A549 (cell line): ENCODE measurements at regions of chr19 and their contacts with region 1.

Region 1: GRCh38 chr19:41276231-41276630 is 12.1 kb downstream of the HNRNPUL1 start:
- DNase-seq: no peak
- ATAC-seq: no peak; a peak in 1 of 6 replicates
- H3K4me3 ChIP-seq: no peak overlapping the region
- H3K27ac ChIP-seq: no peak overlapping the region
- H3K4me1 ChIP-seq: no peaks in the 10 kb centered on the region
- CTCF ChIP-seq: no peak
- EP300 ChIP-seq: no peak
- POLR2A ChIP-seq: no peak
- RAD21 ChIP-seq: no peak

Region 2: GRCh38 chr19:41248895-41249294 is 27.3 kb before region 1 on chr19:
- CTCF ChIA-PET with region 1: no interaction called
- POLR2A ChIA-PET with region 1: no interaction called
- DNase-seq: no peak
- ATAC-seq: peak; percentile 67 to 68; a peak in 5 of 6 replicates
- H3K4me3 ChIP-seq: no peak overlapping the region
- H3K27ac ChIP-seq: no peak overlapping the region
- H3K4me1 ChIP-seq: no peaks in the 10 kb centered on the region
- CTCF ChIP-seq: no peak
- EP300 ChIP-seq: no peak
- POLR2A ChIP-seq: no peak
- RAD21 ChIP-seq: no peak

Region 3: GRCh38 chr19:41288673-41289505 is 12.7 kb after region 1 on chr19:
- CTCF ChIA-PET with region 1: interaction called, 598 read pairs
- POLR2A ChIA-PET with region 1: interaction called, 6 read pairs
- DNase-seq: no peak
- ATAC-seq: no peak
- H3K4me3 ChIP-seq: no peak overlapping the region
- H3K27ac ChIP-seq: no peak overlapping the region
- H3K4me1 ChIP-seq: no peaks in the 10 kb centered on the region
- CTCF ChIP-seq: no peak
- EP300 ChIP-seq: no peak
- POLR2A ChIP-seq: no peak
- RAD21 ChIP-seq: no peak